A549 (cell line): ENCODE measurements at regions of chr2 and their contacts with region 1.

Region 1: DNA sequence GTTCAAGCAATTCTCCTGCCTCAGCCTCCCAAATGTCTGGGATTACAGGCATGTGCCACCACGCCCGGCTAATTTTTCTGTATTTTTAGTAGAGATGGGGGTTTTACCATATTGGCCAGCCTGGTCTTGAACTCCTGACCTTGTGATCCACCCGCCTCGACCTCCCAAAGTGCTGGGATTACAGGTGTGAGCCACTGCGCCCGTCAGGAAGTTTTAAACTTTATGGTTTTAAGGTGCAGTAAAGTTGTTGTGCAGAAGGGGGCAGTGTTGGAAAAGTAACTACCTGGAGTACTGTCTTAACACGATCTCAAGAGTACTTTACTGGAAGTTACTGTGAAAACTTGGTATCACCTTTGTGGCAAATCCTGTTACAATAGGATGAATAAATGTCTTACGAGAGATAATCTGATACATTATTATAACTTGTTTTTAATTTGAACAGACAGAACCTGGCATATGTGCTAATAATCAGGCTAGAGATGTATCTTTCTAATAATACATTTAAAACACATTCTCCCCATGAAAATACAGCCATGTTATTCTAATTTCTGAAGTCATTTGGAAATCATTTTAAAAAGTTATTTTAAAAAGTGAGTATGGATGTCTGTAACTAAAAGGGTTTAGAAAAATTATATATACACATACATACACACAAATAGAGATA is 10.8 kb downstream of the SPDYA start:
- DNase-seq: peak; percentile 50 to 88
- ATAC-seq: peak; percentile 90 to 92
- H3K4me3 ChIP-seq: no peak overlapping the region
- H3K27ac ChIP-seq: no peak overlapping the region
- H3K4me1 ChIP-seq: peaks cover 6% of the 10 kb centered on the region; the same call in 2 of the 3 replicates
- CTCF ChIP-seq: peak; percentile 86
- EP300 ChIP-seq: no peak
- POLR2A ChIP-seq: no peak
- RAD21 ChIP-seq: peak; percentile 84 to 91

Region 2: DNA sequence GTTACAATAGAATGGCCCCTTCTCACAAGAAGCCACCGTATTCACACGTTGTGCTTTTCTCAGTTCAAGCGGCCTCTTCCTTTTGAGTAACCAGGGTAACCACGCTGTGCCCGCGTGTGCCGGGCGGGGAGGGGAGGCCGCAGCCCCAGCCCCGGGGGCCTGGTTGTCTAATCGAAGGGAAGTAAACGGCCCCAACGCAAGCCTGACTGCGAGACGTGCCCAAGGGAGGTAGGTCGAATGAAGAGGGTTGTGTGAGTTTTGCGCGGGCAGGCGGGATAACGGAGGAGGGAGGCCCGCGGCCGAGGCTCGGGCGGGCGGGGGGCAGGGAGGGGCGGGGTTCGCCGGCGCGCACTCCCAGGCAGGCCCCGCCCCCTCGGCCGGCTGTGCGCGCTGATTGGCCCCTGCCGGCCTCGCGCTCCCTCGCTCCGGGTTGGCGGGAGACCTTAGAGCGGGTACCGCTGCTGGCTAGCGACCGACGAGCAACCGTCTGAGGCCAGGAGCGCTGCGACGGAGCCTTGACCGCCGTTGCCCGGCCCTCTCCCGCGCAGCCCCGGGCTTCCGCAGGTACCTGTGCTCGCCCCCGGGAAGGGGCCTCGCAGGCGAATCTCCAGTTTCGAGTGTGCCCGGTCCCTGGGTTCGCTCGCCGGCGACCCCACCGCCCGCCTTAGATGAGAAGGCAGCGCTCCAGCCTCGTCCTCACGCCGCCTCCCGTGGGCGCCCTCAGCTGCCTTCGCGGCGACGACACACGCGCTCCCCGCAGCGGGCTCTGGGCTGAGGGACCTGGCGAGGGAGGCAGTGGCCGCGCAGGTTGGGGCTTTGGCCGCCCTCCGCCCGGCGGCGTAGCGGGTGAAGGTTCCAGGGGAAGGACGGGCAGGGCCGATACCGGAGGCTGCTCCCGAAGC is 10.8 kb before region 1 on chr2 and contains the start of gene SPDYA:
- CTCF ChIA-PET with region 1: interaction called, 22 read pairs
- POLR2A ChIA-PET with region 1: no interaction called
- DNase-seq: peak; percentile 68 to 81
- ATAC-seq: peak; percentile 94 to 95
- H3K4me3 ChIP-seq: peak within 1 kb of the TSS; percentile 43
- H3K27ac ChIP-seq: peak within 1 kb of the TSS; percentile 74 to 85
- H3K4me1 ChIP-seq: peaks cover 11% of the 10 kb centered on the region; the same call in 2 of the 3 replicates
- CTCF ChIP-seq: no peak
- EP300 ChIP-seq: no peak
- POLR2A ChIP-seq: 0 out of 2 replicates have a peak, but pooled peaks have one; percentile 7
- RAD21 ChIP-seq: no peak
- polyA plus RNA-seq, gene SPDYA: 0.17 and 0.49 TPM in 2 replicates